ENCODE measurements at regions of chr1 and their contacts with region 1.

Region 1: DNA sequence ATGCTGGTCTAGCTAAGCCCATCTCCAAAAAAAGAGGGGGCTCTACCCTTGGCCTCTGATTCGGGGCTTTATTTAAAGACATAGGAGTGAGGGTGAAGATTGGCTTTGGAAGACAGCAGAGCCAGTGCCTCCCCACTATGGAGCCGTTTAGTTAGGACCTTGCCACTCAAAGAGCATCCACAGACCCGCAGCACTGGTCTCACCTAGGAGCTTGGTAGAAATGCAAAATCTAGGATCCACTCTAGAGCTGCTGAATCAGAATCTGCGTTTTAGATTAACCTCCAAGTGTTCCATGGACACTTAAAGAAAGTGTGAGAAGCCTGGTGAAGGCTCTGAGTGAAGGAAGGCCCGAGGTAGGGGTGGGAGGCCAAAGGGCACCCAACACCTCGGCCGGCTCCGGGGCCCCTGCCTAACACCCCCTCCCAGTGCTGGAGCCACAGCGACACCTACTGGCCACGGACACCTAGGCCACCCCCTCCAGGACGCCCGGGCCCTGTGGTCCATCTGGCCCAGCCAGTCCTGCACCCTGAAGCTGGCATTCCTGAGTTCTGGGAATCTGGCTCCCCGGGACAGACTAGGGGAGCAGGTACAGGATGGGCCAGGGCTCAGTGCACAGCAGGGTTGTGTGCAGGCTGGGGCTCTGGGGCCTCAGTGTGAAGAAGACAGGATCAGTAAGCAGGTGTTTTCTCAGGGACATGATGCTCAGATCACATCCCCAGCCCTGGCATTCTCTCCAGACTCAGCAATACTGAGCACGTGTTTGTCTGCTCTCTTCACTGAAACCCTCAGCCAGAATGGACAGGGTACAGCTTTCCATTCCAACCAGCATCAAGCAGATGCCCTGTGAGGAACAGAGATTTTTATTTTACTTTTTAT is 79.2 kb downstream of the TMEM53 start:
- DNase-seq: peak; percentile 50 to 85 (median 77)
- ATAC-seq: peak; percentile 81
- H3K4me3 ChIP-seq: no peak overlapping the region
- H3K4me3 Mint-ChIP-seq: no peak overlapping the region
- H3K27ac ChIP-seq: no peak overlapping the region
- H3K27ac Mint-ChIP-seq: no peak overlapping the region
- H3K4me1 ChIP-seq: no peaks in the 10 kb centered on the region
- H3K4me1 Mint-ChIP-seq: no peaks in the 10 kb centered on the region
- H3K27me3 ChIP-seq: no peaks in the 10 kb centered on the region
- H3K27me3 Mint-ChIP-seq: peaks cover 8% of the 10 kb centered on the region
- CTCF ChIP-seq: peak; percentile 85

Region 2: GRCh38 chr1:44089371-44090049 is 505.6 kb before region 1 on chr1:
- CTCF ChIA-PET with region 1: no interaction called
- POLR2A ChIA-PET with region 1: no interaction called
- intact Hi-C with region 1: loop called (anchors 5 to 10 kb)
- DNase-seq: no peak
- ATAC-seq: no peak
- H3K4me3 ChIP-seq: no peak overlapping the region
- H3K4me3 Mint-ChIP-seq: no peak overlapping the region
- H3K27ac ChIP-seq: no peak overlapping the region
- H3K27ac Mint-ChIP-seq: no peak overlapping the region
- H3K4me1 ChIP-seq: no peaks in the 10 kb centered on the region
- H3K4me1 Mint-ChIP-seq: no peaks in the 10 kb centered on the region
- H3K27me3 ChIP-seq: peaks cover 0 to 3% of the 10 kb centered on the region in 2 experiments
- H3K27me3 Mint-ChIP-seq: peaks cover 32% of the 10 kb centered on the region
- CTCF ChIP-seq: no peak

Region 3: DNA sequence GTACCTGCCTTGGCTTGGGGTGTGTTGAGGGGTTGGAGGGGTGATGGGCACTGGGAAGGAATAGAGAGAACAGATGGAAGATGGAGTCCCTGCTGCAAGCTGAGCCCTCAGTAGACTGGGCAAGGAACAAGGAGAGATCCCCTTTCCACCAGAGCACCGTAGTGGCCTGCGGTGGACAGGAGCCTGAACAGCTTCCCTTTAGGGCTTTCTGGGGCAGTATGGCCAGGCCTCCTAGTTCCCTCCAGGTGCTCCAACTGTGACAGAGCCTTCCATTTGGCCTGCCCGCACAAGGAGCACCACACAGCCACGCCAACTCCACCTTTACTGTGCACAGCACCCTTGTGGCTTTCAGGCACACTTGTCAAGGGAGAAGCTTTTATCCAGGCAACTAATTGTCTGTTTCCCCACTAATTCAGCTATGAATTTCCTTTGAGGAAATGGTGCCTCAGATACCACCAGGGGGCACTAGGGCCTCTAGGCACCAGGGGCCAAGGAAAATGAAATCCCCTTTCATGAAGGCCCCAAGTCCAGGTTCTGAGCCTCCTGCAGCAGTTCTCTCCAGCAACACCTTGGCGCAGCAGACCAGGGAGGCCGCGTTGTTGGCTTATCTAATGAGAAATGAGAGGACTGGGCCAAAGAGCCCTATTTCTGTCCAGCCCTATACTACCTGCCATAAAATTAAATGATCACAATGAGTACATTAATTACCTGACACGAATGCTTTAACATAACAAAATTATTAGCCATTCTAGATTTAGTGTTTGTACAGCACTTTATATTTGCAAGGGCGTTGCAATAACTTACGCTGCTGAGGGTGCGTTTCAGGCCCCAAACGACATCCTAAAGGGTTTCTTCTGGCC is 217.0 kb before region 1 on chr1:
- CTCF ChIA-PET with region 1: interaction called, 22 read pairs
- POLR2A ChIA-PET with region 1: interaction called, 3 read pairs
- intact Hi-C with region 1: loop called in 1 of 2 experiments (anchors 1 kb)
- DNase-seq: peak; percentile 5 to 71 (median 51)
- ATAC-seq: peak; percentile 34
- H3K4me3 ChIP-seq: no peak overlapping the region
- H3K4me3 Mint-ChIP-seq: no peak overlapping the region
- H3K27ac ChIP-seq: no peak overlapping the region
- H3K27ac Mint-ChIP-seq: no peak overlapping the region
- H3K4me1 ChIP-seq: no peaks in the 10 kb centered on the region
- H3K4me1 Mint-ChIP-seq: no peaks in the 10 kb centered on the region
- H3K27me3 ChIP-seq: no peaks in the 10 kb centered on the region
- H3K27me3 Mint-ChIP-seq: no peaks in the 10 kb centered on the region
- CTCF ChIP-seq: peak; percentile 59

Region 4: DNA sequence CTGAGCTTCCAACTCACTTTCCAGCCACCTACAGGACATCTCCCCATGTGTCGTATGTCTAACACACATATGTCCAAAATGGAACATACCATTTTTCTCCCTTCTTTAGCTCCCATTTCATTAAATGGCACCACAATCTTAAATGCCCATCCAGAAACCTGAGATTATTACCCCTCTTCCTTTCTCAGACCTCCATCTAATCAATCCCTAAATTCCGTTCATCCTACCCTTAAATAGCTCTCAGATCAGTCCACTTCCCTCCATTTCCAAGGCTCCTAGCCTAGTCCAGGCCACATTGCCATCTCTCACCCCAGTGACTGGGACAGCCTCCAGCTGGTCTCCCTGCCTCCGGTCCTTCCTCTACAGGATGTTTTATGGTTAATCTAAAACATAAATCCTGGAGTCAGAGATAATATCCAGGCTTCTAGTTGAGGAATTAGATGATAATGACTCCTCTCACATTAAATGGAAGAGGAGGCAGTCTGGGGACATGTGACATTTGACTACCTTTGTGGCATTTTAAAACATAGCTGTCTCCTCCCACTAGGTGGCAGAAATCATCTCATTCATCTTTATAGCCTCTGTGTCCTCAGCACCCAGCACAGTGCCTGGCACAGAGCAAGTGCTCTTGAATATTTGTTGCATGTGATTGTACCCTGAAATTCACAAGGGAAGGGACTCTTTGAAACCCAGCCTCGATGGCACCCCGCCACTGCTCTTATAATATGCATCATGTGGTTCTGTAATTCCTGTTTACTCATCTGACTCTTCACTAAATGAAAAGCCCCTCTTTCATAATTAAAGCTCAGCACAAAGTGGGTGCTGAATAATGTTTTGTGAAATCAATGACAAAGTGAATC is 23.2 kb before region 1 on chr1:
- CTCF ChIA-PET with region 1: interaction called, 20 read pairs
- POLR2A ChIA-PET with region 1: no interaction called
- intact Hi-C with region 1: no loop called
- DNase-seq: peak in 3 of 9 experiments; percentile 9 to 58 (median 44)
- ATAC-seq: peak; percentile 40
- H3K4me3 ChIP-seq: no peak overlapping the region
- H3K4me3 Mint-ChIP-seq: no peak overlapping the region
- H3K27ac ChIP-seq: no peak overlapping the region
- H3K27ac Mint-ChIP-seq: no peak overlapping the region
- H3K4me1 ChIP-seq: no peaks in the 10 kb centered on the region
- H3K4me1 Mint-ChIP-seq: no peaks in the 10 kb centered on the region
- H3K27me3 ChIP-seq: no peaks in the 10 kb centered on the region
- H3K27me3 Mint-ChIP-seq: peaks cover 5% of the 10 kb centered on the region
- CTCF ChIP-seq: peak; percentile 62

Region 5: GRCh38 chr1:44848456-44849181 is 253.5 kb after region 1 on chr1:
- CTCF ChIA-PET with region 1: no interaction called
- POLR2A ChIA-PET with region 1: no interaction called
- intact Hi-C with region 1: no loop called
- DNase-seq: no peak
- ATAC-seq: no peak
- H3K4me3 ChIP-seq: no peak overlapping the region
- H3K4me3 Mint-ChIP-seq: no peak overlapping the region
- H3K27ac ChIP-seq: no peak overlapping the region
- H3K27ac Mint-ChIP-seq: no peak overlapping the region
- H3K4me1 ChIP-seq: no peaks in the 10 kb centered on the region
- H3K4me1 Mint-ChIP-seq: no peaks in the 10 kb centered on the region
- H3K27me3 ChIP-seq: no peaks in the 10 kb centered on the region
- H3K27me3 Mint-ChIP-seq: no peaks in the 10 kb centered on the region
- CTCF ChIP-seq: no peak

Measured in CD8-positive, alpha-beta T cell (primary cell).